ENCODE measurements at regions of chr11 and their contacts with region 1.

Region 1: GRCh38 chr11:60786811-60787567 is 1.9 kb downstream of the MS4A10 start:
- DNase-seq: peak; percentile 75 to 90 (median 85)
- ATAC-seq: peak; percentile 66 to 91 (median 77)
- H3K4me3 ChIP-seq: no peak overlapping the region
- H3K27ac ChIP-seq: peak overlapping the region in 5 of 12 donors; percentile 20 to 64 (median 57)
- H3K4me1 ChIP-seq: peaks cover 0 to 30% (median 10%) of the 10 kb centered on the region in 12 donors
- H3K27me3 ChIP-seq: no peaks in the 10 kb centered on the region
- CTCF ChIP-seq: no peak
- POLR2A ChIP-seq: no peak

Region 2: GRCh38 chr11:60825571-60826189 is 38.7 kb after region 1 on chr11:
- intact Hi-C with region 1: loop called in 1 of 10 experiments (anchors 5 kb)
- DNase-seq: no peak
- ATAC-seq: no peak
- H3K4me3 ChIP-seq: no peak overlapping the region
- H3K27ac ChIP-seq: no peak overlapping the region
- H3K4me1 ChIP-seq: peaks cover 0 to 3% (median 0%) of the 10 kb centered on the region in 12 donors
- H3K27me3 ChIP-seq: no peaks in the 10 kb centered on the region
- CTCF ChIP-seq: no peak
- POLR2A ChIP-seq: no peak